Vagina (tissue), 2 donors: ENCODE measurements at regions of chr9 and their contacts with region 1.

Region 1: GRCh38 chr9:14353222-14354056 is 39.5 kb upstream of the NFIB start:
- DNase-seq: peak in 1 of 2 donors; percentile 91
- H3K4me3 ChIP-seq: no peak overlapping the region
- H3K27ac ChIP-seq: peak overlapping the region; percentile 54
- H3K4me1 ChIP-seq: peaks cover 36% of the 10 kb centered on the region
- H3K27me3 ChIP-seq: no peaks in the 10 kb centered on the region
- CTCF ChIP-seq: peak; percentile 81 to 96 (median 85)
- POLR2A ChIP-seq: no peak

Region 2: DNA sequence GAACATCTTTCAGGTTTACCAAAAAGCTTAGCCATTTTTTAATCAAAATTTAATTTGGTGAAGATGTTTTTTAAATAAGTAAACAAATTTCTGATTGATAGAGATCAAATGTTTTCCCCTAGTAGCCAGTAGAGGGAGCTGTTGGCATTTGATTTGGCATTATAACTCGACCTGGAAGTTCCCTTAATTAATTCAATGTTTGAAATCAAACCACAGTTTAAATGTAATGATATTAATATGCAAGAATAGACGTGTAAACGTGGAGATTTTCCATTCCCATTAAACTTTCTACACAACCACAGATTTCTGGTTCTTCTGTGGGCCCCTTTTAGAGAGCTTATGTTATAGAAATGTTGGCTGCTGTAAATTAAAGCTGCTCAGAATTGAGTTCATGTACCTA is 925.9 kb before region 1 on chr9:
- intact Hi-C with region 1: loop called (anchors 10 kb)
- DNase-seq: no peak
- H3K4me3 ChIP-seq: no peak overlapping the region
- H3K27ac ChIP-seq: no peak overlapping the region
- H3K4me1 ChIP-seq: no peaks in the 10 kb centered on the region
- H3K27me3 ChIP-seq: no peaks in the 10 kb centered on the region
- CTCF ChIP-seq: peak; percentile 63 to 71 (median 69)
- POLR2A ChIP-seq: no peak

Region 3: DNA sequence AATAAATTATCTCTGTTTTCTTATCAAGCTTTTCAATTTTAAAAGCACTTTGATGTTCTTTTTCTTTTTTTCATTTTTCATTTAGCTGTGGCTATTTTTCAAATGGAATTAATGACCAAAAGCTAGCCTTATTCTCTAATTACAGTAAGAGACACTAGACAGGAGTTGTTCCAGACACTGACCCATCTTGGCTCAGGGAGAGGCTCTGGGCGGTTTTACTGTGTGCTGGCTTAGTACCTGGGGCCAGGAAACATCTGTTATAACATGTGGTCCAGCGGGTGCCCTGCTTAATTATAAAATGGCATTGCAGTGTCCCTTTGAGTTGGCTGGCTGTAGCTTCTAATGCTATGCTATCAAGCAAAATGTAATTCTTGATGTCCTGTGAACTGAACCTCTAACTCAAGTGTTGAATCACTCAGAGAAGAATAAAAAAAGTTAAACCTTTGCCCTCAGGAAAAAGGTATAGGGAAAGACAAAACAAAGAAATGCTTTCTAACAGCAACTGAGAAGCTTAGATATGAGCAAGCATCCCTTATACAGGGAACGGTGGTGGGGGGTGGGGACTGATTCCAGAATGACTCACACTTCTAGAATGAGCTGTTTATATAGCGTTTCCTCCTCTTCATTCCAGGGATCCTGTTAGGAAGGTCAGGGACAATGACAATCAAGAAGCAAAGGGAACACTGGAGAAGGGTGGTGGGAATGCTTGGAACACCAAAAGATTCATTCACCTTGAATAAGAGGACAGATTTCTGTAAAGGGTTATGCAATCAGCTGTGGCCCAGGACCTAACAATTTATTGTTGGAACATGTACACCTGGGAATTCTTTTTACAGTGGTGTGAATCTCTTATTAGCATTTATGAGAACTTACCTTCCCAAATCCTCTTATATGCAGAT is 19.2 kb after region 1 on chr9:
- intact Hi-C with region 1: no loop called
- DNase-seq: no peak
- H3K4me3 ChIP-seq: no peak overlapping the region
- H3K27ac ChIP-seq: peak overlapping the region; percentile 17
- H3K4me1 ChIP-seq: peaks cover 15% of the 10 kb centered on the region
- H3K27me3 ChIP-seq: no peaks in the 10 kb centered on the region
- CTCF ChIP-seq: no peak
- POLR2A ChIP-seq: no peak